Dorsolateral prefrontal cortex (tissue), 120 donors: ENCODE measurements at regions of chr1 and their contacts with region 1.

Region 1: DNA sequence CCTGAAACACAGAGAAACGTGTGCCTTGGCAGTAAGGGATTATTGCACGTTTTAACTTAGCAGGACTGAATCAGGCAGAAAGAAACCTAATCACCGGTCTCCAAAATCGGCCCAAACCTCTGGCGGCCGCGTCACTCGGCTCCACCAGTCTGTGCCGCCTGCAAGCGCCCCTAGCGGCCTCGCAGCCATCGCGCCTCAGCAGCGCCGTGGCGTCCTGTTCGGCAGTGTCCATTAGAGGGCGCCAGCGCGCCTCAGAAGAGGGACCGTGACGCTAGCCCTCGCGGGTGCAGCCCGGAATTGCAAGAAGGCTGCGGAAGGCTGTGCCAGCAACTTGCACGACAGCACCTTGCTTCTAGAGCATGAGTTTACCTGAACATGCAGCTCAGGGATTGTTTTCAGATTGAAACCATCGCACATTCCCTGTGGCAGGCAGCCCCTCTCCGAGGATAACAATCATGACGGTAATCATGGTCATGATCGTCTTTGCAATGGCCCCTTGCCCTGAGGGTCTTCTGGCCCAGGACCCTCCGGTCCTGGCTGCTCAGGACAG is 164.4 kb downstream of the TRIM33 start:
- DNase-seq: peak; percentile 91 to 98 (median 94)
- H3K4me3 ChIP-seq: peak overlapping the region; percentile 42 to 82 (median 63)
- H3K27ac ChIP-seq: peak overlapping the region in 56 of 59 donors; percentile 10 to 92 (median 76)
- H3K27me3 ChIP-seq: no peaks in the 10 kb centered on the region
- CTCF ChIP-seq: peak; percentile 96 to 100 (median 100)

Region 2: DNA sequence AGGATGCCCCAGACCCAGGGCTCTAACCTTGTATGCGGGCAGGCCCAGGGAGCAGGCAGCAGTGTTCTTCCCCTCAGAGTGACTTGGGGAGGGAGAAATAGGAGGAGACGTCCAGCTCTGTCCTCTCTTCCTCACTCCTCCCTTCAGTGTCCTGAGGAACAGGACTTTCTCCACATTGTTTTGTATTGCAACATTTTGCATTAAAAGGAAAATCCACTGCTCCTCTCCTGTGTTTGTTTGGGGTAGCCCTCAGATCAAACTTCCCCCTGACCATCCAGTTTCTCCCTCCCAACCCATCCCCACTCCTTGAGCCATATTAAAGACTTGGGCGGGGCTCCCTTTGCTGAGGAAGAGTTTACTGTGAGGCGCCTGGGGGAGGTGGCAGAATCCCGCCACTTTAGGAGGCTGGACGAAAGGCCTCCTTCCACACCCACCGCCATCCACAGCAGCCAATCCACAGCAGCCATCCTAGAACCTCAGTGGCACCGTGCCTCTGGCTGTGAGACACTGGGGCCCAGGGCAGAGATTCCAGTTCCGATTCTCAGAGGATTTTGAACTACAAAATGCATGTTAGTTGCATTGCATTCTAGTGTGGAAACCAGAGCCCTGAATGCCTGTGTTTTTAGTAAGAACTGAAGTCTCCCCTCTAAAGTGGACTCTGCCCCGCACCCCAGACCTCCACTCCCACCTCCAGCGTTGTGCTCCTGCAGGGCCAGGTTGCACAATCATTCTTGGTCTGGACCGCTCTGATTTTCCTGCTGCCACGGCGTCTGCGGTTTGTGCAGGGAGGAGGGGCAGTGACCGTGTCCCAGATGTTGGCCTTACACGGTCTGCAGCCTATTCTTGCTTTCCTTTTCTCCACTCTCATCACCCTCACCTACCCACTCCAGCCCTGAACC is 364.3 kb before region 1 on chr1:
- intact Hi-C with region 1: no loop called
- DNase-seq: no peak
- H3K4me3 ChIP-seq: peak overlapping the region in 17 of 59 donors; percentile 3 to 49 (median 21)
- H3K27ac ChIP-seq: peak overlapping the region in 8 of 59 donors; percentile 13 to 61 (median 38)
- H3K27me3 ChIP-seq: no peaks in the 10 kb centered on the region
- CTCF ChIP-seq: no peak

Region 3: DNA sequence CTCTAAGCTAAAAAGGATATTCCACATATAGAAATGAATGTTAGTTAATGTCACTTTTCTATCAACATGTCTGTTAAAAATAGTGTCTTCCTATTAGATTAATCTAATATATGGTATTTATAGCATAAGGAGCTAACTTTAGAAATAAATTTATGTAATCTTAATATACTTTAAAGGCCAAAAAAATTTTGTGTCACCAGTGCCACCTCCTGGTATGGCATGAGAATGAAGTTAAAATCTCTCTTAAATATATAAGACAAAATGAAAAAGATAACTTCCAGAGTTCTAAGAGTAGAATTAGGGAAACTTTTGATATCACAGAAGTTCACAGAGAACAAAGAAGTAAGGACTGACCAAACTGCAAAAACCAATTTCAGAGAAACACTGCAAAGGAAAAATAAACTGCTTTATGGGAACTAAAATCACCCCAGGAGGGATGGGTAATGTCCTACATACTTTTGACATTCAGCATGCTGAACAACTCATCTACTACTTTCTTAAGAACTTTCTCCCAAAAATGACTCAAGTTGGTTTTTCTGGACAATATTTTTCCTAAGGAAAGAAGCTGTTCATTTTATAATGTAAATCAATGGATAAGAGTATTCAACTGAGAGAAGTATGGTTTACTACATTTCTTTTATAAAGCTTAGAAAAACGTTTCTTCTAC is 81.7 kb after region 1 on chr1:
- intact Hi-C with region 1: loop called in 1 of 2 experiments (anchors 10 kb)
- DNase-seq: no peak
- H3K4me3 ChIP-seq: no peak overlapping the region
- H3K27ac ChIP-seq: no peak overlapping the region
- H3K27me3 ChIP-seq: no peaks in the 10 kb centered on the region
- CTCF ChIP-seq: peak in 53 of 56 donors; percentile 31 to 69 (median 50)

Region 4: DNA sequence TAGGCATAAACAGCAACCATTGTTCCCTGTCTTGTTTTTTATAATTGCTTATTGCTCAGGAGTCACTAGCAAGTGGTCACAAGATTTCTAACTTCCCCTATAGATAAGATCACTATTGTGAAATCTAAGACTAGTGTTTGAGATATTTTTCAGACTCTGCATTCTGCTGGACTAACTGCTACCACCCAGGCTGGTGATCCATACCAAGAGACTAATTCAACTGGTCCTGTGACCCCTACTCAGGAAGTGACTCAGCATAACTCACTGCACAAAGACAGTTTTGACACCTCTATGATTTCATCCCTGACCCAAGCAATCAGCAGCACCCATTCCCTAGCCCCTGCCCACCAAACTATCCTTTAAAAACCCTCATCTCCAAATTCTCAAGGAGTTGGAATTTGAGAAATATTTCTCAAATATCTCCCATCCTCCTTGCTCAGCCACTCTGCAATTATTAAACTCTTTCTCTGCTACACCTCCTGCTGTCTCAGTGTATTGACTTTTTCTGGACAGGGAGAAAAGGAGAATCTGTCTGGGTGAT is 111.8 kb after region 1 on chr1:
- intact Hi-C with region 1: no loop called
- DNase-seq: no peak
- H3K4me3 ChIP-seq: no peak overlapping the region
- H3K27ac ChIP-seq: no peak overlapping the region
- H3K27me3 ChIP-seq: no peaks in the 10 kb centered on the region
- CTCF ChIP-seq: no peak

Region 5: DNA sequence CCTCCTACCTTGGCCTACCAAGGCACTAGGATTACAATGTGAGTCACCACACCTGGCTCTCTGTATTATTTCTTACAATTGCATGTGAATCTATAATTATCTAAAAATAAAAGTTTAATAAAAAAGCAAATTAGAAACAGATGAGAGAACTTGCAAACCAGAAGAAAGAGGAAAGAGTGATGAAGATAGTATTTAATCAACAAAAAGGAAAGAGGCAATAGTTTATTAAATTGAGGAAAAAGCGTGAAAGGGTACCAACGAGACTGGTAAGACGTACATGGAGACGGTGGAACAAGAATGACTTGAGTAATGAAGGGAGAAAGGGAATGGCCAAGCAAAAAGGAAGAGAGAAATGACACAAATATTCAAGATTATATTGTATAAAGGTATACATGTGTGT is 222.5 kb after region 1 on chr1:
- intact Hi-C with region 1: loop called in 1 of 2 experiments (anchors 5 kb)
- DNase-seq: no peak
- H3K4me3 ChIP-seq: no peak overlapping the region
- H3K27ac ChIP-seq: no peak overlapping the region
- H3K27me3 ChIP-seq: no peaks in the 10 kb centered on the region
- CTCF ChIP-seq: no peak

Region 6: GRCh38 chr1:114670083-114671010 is 323.8 kb after region 1 on chr1:
- intact Hi-C with region 1: loop called (anchors 2 to 5 kb)
- DNase-seq: peak; percentile 63 to 86 (median 78)
- H3K4me3 ChIP-seq: peak overlapping the region; percentile 56 to 95 (median 78)
- H3K27ac ChIP-seq: peak overlapping the region in 8 of 59 donors; percentile 4 to 70 (median 42)
- H3K27me3 ChIP-seq: peaks cover 0 to 14% (median 0%) of the 10 kb centered on the region in 45 donors
- CTCF ChIP-seq: peak in 34 of 56 donors; percentile 10 to 57 (median 34)

Region 7: DNA sequence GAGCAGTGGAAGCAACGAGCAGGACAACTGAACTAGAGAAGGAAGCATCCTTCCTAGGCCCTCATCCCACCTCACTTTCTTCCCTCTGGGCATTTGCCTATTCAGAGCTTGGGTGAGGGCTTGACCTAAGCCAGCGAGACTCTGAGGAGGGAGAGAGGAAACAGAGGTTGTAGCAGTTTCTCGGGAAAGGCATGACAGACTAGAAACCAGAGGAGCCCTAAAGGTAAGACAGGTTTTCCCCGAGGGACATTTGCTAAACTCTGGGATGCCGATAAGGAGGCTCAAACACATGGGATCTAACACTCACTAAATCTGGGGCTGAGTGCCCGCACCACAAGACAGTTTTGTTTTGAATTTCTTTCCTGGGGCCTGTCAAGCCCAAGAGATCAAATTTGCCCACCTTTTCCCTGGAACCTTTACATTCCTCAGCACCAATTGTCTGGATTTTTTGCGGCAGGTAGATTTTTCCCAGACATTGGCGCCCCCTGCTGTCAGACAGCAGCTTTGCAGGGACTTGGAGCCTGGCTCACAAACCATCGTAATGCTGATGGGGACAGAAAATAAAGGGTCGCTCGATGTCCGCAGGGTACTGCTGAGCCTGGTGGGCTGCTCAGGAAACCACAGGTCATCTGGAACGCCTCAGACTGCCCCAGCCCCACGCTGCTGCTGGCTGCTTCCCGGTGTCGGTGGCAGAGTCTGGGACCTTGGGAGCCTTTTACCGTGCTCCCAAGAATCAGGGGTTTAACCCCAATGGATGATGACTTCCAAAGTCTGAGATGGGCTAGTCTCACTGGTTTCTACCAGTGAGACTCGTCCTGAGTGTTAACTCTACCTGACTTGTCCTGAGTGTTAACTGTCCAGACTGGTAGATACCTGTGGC is 766.2 kb after region 1 on chr1:
- intact Hi-C with region 1: loop called in 1 of 2 experiments (anchors 5 kb)
- DNase-seq: peak in 3 of 10 donors; percentile 24 to 69 (median 57)
- H3K4me3 ChIP-seq: no peak overlapping the region
- H3K27ac ChIP-seq: no peak overlapping the region
- H3K27me3 ChIP-seq: no peaks in the 10 kb centered on the region
- CTCF ChIP-seq: peak; percentile 63 to 96 (median 90)